CD8-positive, alpha-beta memory T cell (primary cell): ENCODE measurements at regions of chr2 and their contacts with region 1.

Region 1: GRCh38 chr2:64653349-64654062 is at the start of gene SERTAD2:
- DNase-seq: peak; percentile 80 to 92 (median 87)
- H3K4me3 ChIP-seq: peak within 1 kb of the TSS; percentile 90
- H3K4me3 Mint-ChIP-seq: peak within 1 kb of the TSS; percentile 90 to 95 (median 92)
- H3K27ac ChIP-seq: peak within 1 kb of the TSS; percentile 76
- H3K27ac Mint-ChIP-seq: peak within 1 kb of the TSS; percentile 88 to 99 (median 96)
- H3K4me1 ChIP-seq: peaks cover 55% of the 10 kb centered on the region
- H3K4me1 Mint-ChIP-seq: peaks cover 51 to 71% (median 56%) of the 10 kb centered on the region in 3 donors
- H3K27me3 ChIP-seq: no peaks in the 10 kb centered on the region
- H3K27me3 Mint-ChIP-seq: no peaks in the 10 kb centered on the region
- total RNA-seq, gene SERTAD2: 20.6 to 21.4 TPM

Region 2: GRCh38 chr2:64523666-64524603 is 129.6 kb before region 1 on chr2 and contains the start of gene AFTPH:
- CTCF ChIA-PET with region 1: interaction called, 31 read pairs
- POLR2A ChIA-PET with region 1: interaction called, 11 read pairs
- DNase-seq: peak; percentile 99 to 100 (median 100)
- H3K4me3 ChIP-seq: peak within 1 kb of the TSS; percentile 79
- H3K4me3 Mint-ChIP-seq: peak within 1 kb of the TSS; percentile 89 to 100 (median 98)
- H3K27ac ChIP-seq: peak within 1 kb of the TSS; percentile 77
- H3K27ac Mint-ChIP-seq: peak within 1 kb of the TSS; percentile 84 to 100 (median 98)
- H3K4me1 ChIP-seq: peaks cover 30% of the 10 kb centered on the region
- H3K4me1 Mint-ChIP-seq: peaks cover 41 to 48% (median 46%) of the 10 kb centered on the region in 3 donors
- H3K27me3 ChIP-seq: no peaks in the 10 kb centered on the region
- H3K27me3 Mint-ChIP-seq: peaks cover 3% of the 10 kb centered on the region in 2 donors
- total RNA-seq, gene AFTPH: 41.4 to 44.2 TPM

Region 3: DNA sequence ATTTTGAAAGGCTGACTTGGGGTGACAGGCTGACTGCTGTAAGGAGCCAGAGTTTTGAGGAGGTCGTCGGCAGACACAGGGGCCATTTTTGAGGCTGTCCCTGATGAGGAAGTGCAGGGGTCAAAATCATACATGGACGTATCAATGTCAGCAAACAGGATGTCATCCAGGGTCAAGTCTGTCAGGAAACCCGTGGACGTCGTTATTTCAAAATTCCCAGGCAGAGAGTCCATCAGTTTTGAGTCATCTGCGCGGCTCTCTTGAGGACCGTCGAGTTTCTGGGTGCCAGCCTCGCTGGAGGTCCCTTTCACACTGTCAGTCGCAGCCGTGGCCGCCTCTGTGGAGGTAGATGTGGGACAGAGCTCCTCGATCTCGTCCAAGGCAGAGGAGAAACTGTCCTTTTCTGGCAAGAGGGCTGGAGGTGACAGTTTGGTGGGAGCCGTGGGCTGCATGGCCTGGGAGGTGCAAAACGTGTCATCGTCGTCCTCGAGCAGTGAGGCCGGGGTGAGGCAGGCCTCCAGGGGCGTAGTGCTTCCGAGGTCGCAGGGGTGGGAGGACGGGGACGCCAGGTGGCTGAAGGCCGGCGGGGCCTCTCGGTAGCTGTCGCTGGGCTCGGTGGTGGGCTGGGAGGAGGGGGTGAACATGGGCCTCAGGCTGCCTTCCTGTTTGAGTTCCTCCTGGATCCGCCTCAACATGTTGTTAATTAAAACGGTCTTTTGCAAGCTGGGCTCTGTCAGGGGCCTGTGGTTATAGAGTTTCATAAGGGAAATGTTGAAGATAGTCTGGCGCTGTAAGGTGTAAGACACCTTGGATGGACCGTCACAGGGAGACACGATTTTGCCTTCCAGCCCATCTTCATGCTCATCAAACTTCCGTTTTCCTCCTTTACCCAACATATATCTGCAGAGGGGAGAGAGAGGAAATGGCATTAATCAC is 17.3 kb before region 1 on chr2:
- CTCF ChIA-PET with region 1: interaction called, 17 read pairs
- POLR2A ChIA-PET with region 1: interaction called, 5 read pairs
- DNase-seq: no peak
- H3K4me3 ChIP-seq: no peak overlapping the region
- H3K4me3 Mint-ChIP-seq: peak overlapping the region in 6 of 7 donors; percentile 52 to 76 (median 67)
- H3K27ac ChIP-seq: no peak overlapping the region
- H3K27ac Mint-ChIP-seq: peak overlapping the region; percentile 21 to 95 (median 88)
- H3K4me1 ChIP-seq: peaks cover 49% of the 10 kb centered on the region
- H3K4me1 Mint-ChIP-seq: peaks cover 45 to 59% (median 53%) of the 10 kb centered on the region in 3 donors
- H3K27me3 ChIP-seq: no peaks in the 10 kb centered on the region
- H3K27me3 Mint-ChIP-seq: no peaks in the 10 kb centered on the region

Region 4: DNA sequence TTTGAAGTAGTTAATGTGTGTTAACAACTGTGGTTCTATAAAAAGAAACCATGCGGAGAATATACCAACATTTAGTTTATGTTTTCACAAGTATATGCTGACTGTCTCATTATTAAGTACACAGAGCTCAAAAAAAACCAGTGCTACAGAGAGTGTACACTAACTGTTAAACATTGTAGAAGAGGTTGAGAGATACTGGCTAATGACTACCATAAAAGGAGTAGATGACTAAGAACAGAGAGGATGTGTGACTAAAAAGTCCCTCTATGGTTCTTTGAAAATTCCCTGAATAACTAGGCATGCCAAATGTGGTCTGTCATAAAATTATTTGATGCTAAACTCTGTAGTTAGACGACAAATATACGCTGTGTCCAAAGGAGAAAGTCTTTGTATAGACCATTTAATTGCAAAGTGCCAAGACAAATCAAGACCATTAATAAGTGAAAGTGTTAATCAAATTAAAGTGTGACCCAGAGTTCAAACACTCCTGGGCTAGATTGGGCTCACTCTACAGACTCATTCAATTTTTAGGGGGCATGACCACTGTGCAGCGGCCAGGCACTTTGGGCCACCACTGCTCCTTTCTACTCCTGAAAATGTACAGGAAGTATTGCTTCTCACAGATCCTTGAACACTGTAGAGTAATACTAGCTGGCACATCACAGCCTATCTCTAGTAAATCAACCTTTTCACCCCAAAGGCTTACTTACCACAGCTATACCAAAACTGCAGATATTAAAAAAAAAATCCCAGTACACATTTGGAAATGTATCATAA is 45.4 kb after region 1 on chr2:
- CTCF ChIA-PET with region 1: interaction called, 14 read pairs
- POLR2A ChIA-PET with region 1: interaction called, 6 read pairs
- DNase-seq: no peak
- H3K4me3 ChIP-seq: no peak overlapping the region
- H3K4me3 Mint-ChIP-seq: peak overlapping the region in 4 of 7 donors; percentile 5 to 55 (median 20)
- H3K27ac ChIP-seq: no peak overlapping the region
- H3K27ac Mint-ChIP-seq: peak overlapping the region in 3 of 8 donors; percentile 2 to 37 (median 15)
- H3K4me1 ChIP-seq: peaks cover 10% of the 10 kb centered on the region
- H3K4me1 Mint-ChIP-seq: peaks cover 28 to 47% (median 46%) of the 10 kb centered on the region in 3 donors
- H3K27me3 ChIP-seq: no peaks in the 10 kb centered on the region
- H3K27me3 Mint-ChIP-seq: no peaks in the 10 kb centered on the region

Region 5: DNA sequence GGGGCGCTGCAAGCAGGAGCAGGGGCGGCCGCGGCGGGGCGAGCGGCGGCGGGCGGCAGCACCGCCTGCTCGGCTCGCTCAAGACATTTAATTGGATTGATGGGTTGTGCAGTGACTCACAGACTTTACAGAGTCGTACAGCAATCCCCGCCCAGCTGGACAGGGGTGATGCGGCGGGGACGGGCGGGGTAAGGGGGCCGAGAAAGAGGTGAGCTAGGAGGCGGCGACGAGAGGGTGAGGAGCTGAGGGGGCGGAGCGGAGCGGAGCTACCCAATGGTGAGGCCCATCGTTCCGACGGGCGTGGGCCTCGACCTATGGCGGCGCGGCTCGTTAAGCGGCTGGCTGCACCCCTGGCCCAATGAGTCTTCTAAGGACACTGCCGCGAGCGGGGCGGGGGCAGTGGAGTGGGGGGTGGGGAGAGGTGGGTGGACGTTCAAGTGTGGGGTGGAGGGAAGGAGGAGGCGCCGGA is 97.3 kb after region 1 on chr2:
- CTCF ChIA-PET with region 1: interaction called, 65 read pairs
- POLR2A ChIA-PET with region 1: interaction called, 167 read pairs
- DNase-seq: peak in 3 of 5 donors; percentile 96 to 99 (median 98)
- H3K4me3 ChIP-seq: peak overlapping the region; percentile 96
- H3K4me3 Mint-ChIP-seq: peak overlapping the region; percentile 90 to 100 (median 99)
- H3K27ac ChIP-seq: peak overlapping the region; percentile 90
- H3K27ac Mint-ChIP-seq: peak overlapping the region; percentile 93 to 99 (median 98)
- H3K4me1 ChIP-seq: peaks cover 17% of the 10 kb centered on the region
- H3K4me1 Mint-ChIP-seq: peaks cover 22 to 35% (median 27%) of the 10 kb centered on the region in 3 donors
- H3K27me3 ChIP-seq: no peaks in the 10 kb centered on the region
- H3K27me3 Mint-ChIP-seq: peaks cover 0 to 2% of the 10 kb centered on the region in 2 donors

Region 6: GRCh38 chr2:64831134-64831976 is 177.8 kb after region 1 on chr2:
- CTCF ChIA-PET with region 1: interaction called, 67 read pairs
- POLR2A ChIA-PET with region 1: interaction called, 6 read pairs
- DNase-seq: peak; percentile 71 to 87 (median 74)
- H3K4me3 ChIP-seq: peak overlapping the region; percentile 33
- H3K4me3 Mint-ChIP-seq: peak overlapping the region; percentile 32 to 86 (median 67)
- H3K27ac ChIP-seq: no peak overlapping the region
- H3K27ac Mint-ChIP-seq: peak overlapping the region in 7 of 8 donors; percentile 6 to 97 (median 61)
- H3K4me1 ChIP-seq: peaks cover 10% of the 10 kb centered on the region
- H3K4me1 Mint-ChIP-seq: peaks cover 11 to 12% (median 11%) of the 10 kb centered on the region in 3 donors
- H3K27me3 ChIP-seq: no peaks in the 10 kb centered on the region
- H3K27me3 Mint-ChIP-seq: peaks cover 1 to 4% of the 10 kb centered on the region in 2 donors